BJ (cell line): ENCODE measurements at regions of chr1 and their contacts with region 1.

Region 1: GRCh38 chr1:62117018-62117750 is 77.5 kb upstream of the L1TD1 start:
- DNase-seq: no peak
- H3K4me3 ChIP-seq: no peak overlapping the region
- H3K27me3 ChIP-seq: no peaks in the 10 kb centered on the region
- CTCF ChIP-seq: no peak

Region 2: DNA sequence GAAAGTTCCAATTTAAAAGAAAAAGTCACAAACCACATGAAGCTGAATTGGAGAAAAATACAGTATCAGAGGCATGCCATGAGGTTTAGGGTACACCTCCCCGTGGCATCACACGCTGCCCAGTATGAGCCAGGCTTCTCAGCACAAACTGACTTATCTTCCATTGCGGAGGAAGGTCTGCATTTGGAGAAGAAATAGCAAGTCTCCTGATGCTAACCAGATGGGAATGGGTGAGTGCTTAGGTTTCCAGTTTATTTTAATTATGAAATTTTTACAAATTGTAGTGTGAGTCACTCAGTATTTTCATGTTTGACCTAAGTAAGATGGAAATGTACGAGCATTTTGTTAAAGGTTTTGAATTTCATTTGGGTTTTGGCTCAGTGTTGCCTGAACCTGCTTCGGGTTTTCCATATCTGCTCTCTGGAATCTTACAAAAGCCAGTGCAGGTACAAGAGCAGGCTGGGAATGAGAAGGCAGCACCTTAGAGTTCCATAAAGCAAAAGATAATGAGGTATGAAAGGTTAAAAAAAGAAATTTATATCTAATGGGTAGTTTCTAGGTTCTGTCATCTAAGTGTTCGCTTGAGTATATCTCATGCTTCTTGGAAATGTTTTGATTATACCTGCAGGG is 161.1 kb before region 1 on chr1:
- CTCF ChIA-PET with region 1: no interaction called
- POLR2A ChIA-PET with region 1: no interaction called
- DNase-seq: no peak
- H3K4me3 ChIP-seq: no peak overlapping the region
- H3K27me3 ChIP-seq: no peaks in the 10 kb centered on the region
- CTCF ChIP-seq: no peak

Region 3: DNA sequence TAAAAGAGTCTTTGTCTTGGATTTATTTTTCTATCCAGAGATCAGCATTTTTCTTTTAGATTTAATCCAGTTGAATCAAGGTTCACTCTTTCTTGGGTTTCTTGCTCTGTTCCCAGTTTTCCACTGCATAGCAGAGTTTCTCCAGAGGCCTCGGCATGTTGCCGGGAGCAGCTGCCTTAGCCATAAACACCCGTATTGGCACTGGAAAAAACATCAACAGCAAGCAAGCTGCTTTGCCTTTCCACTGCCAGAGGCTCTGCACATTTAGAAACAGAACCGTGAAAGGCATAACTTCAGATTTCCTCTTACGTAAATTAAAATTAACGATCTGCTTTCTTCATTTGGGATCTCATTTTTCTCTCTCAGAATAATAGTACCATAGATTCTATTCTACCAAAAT is 104.3 kb before region 1 on chr1:
- CTCF ChIA-PET with region 1: no interaction called
- POLR2A ChIA-PET with region 1: no interaction called
- DNase-seq: no peak
- H3K4me3 ChIP-seq: no peak overlapping the region
- H3K27me3 ChIP-seq: no peaks in the 10 kb centered on the region
- CTCF ChIP-seq: no peak

Region 4: GRCh38 chr1:62131093-62131725 is 14.0 kb after region 1 on chr1:
- CTCF ChIA-PET with region 1: interaction called, 11 read pairs
- POLR2A ChIA-PET with region 1: interaction called, 24 read pairs
- DNase-seq: no peak
- H3K4me3 ChIP-seq: no peak overlapping the region
- H3K27me3 ChIP-seq: no peaks in the 10 kb centered on the region
- CTCF ChIP-seq: peak; percentile 97